AG04450 (cell line): ENCODE measurements at regions of chr6 and their contacts with region 1.

Region 1: GRCh38 chr6:105077596-105078385 is 102.0 kb downstream of the POPDC3 start:
- DNase-seq: peak; percentile 6
- H3K4me3 ChIP-seq: no peak overlapping the region
- H3K27ac ChIP-seq: no peak overlapping the region
- H3K27me3 ChIP-seq: no peaks in the 10 kb centered on the region
- CTCF ChIP-seq: peak; percentile 61

Region 2: GRCh38 chr6:104789770-104790190 is 288.0 kb before region 1 on chr6:
- CTCF ChIA-PET with region 1: interaction called, 36 read pairs
- POLR2A ChIA-PET with region 1: no interaction called
- DNase-seq: peak; percentile 10
- H3K4me3 ChIP-seq: no peak overlapping the region
- H3K27ac ChIP-seq: no peak overlapping the region
- H3K27me3 ChIP-seq: no peaks in the 10 kb centered on the region
- CTCF ChIP-seq: peak; percentile 25; the same call in 1 of the 2 replicates

Region 3: DNA sequence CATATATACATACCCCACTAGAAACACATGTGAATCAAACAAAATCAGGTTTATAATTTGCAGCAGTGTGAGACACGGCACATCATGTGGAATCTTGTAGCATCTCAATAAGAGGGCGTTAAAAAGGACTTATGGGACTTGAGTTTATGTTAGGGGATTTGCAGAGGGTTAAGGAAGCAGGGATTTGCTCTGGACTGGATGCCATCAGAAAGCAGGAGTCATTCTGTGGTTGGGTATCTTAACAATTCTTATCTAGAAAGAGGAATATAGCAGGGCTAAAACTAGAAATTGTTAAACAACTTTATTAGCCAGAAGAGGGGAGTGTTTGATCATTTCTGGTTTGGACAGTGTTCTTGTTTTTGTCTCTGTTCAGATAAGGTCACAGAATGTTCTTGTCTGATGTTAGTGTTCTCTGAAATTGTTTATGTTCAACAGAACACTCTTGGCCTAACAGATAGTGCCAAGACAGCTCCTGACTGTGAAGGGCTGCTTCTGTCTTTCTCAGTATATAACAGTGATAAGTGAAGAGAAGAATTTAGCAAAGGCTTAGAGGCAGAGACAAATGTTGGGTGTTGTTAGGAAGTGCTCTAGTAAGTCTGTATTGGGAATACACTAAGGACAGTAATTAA is 81.7 kb before region 1 on chr6:
- CTCF ChIA-PET with region 1: interaction called, 27 read pairs
- POLR2A ChIA-PET with region 1: no interaction called
- DNase-seq: no peak
- H3K4me3 ChIP-seq: no peak overlapping the region
- H3K27ac ChIP-seq: no peak overlapping the region
- H3K27me3 ChIP-seq: no peaks in the 10 kb centered on the region
- CTCF ChIP-seq: no peak

Region 4: DNA sequence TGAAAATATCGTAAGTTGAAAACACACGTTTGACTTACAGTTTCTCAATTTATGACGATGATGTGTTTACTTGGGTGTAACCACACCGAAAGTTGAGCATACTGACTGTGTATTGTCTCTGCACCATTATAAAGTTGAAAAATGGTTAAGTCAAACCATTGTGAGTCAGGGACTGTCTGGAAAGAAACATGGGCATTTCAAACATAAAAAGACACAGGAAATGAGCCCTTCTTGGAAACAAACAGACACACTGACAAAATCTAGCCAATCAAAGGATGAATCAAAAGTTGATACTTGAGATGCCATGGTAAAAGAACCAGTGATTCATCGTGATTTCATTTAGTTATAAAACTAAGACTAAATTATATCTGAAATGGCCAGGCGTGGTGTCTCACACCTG is 96.7 kb after region 1 on chr6:
- CTCF ChIA-PET with region 1: no interaction called
- POLR2A ChIA-PET with region 1: no interaction called
- DNase-seq: no peak
- H3K4me3 ChIP-seq: peak overlapping the region; percentile 23; the same call in 1 of the 2 replicates
- H3K27ac ChIP-seq: no peak overlapping the region
- H3K27me3 ChIP-seq: no peaks in the 10 kb centered on the region
- CTCF ChIP-seq: no peak